Activated naive CD4-positive, alpha-beta T cell treated with anti-CD3 and anti-CD28 coated beads for 36 hours (primary cell): ENCODE measurements at regions of chr10 and their contacts with region 1.

Region 1: GRCh38 chr10:16828114-16828568 is 10.9 kb upstream of the RSU1 start:
- DNase-seq: peak; percentile 81
- H3K4me3 Mint-ChIP-seq: no peak overlapping the region
- H3K27ac Mint-ChIP-seq: no peak overlapping the region
- H3K4me1 Mint-ChIP-seq: peaks cover 4% of the 10 kb centered on the region
- H3K27me3 Mint-ChIP-seq: no peaks in the 10 kb centered on the region

Region 2: DNA sequence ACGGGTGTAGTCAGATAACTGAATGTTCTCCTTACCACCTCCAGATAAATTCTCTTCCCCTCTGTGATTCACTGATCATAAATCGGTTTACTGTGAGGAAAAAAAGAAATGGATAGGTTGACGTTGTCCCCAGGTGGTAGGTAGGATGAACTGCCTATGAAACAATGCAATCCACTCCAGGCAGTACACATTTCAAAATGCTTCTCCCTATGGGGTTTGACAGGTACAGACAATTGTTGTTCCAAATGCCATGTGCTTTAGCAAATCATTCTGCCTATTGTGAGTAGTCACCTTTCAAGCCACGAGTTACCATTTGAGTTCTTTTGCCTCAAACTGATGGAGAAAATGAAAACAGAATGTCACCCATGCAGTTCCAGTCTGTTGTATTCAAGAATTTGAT is 421.7 kb after region 1 on chr10:
- CTCF ChIA-PET with region 1: no interaction called
- intact Hi-C with region 1: loop called (anchors 1 kb)
- DNase-seq: no peak
- H3K4me3 Mint-ChIP-seq: no peak overlapping the region
- H3K27ac Mint-ChIP-seq: no peak overlapping the region
- H3K4me1 Mint-ChIP-seq: no peaks in the 10 kb centered on the region
- H3K27me3 Mint-ChIP-seq: no peaks in the 10 kb centered on the region

Region 3: DNA sequence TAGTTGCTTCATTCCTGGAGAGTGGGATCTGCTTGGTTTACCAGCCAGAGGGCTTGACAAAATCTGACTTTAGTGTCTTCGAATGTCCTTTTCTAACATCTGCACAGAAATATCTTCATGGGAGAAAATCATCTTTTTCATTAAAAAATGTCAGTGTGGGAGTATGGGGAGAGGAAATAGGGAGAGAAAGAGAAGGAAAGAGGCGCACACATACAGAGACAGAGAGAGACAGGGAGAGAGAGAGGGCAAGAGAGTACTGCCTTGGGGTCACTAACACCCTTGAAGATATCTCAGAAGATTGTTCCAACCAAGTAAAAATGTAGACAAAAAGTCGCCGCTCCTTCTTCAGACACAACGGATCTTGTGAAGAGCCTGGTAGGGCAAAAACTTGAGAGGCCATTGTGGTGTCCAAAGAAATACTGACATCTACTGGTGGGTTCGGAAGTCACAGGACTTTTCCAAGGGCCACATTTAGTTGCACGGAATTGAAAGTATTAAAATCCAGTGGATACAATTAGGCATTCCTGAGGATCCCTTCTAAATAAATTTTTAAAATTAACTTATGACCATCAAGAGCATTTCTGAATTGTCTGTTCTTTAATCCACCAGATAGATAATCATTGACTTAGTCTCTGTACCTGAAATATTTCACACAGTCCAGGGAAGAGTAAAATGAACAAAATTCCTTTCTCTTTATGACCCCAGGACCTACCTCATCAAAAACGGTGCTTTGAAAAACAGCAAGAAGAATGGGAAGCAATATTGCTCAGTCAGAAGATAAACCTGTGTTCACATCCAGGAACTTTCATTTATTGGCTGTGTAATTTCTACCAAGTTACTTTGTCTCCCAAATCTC is 429.6 kb after region 1 on chr10:
- CTCF ChIA-PET with region 1: interaction called, 22 read pairs
- intact Hi-C with region 1: loop called (anchors 1 kb)
- DNase-seq: peak; percentile 67
- H3K4me3 Mint-ChIP-seq: peak overlapping the region; percentile 3
- H3K27ac Mint-ChIP-seq: no peak overlapping the region
- H3K4me1 Mint-ChIP-seq: peaks cover 4% of the 10 kb centered on the region
- H3K27me3 Mint-ChIP-seq: no peaks in the 10 kb centered on the region

Region 4: GRCh38 chr10:17599089-17599488 is 770.9 kb after region 1 on chr10:
- CTCF ChIA-PET with region 1: no interaction called
- intact Hi-C with region 1: loop called (anchors 10 kb)
- DNase-seq: no peak
- H3K4me3 Mint-ChIP-seq: no peak overlapping the region
- H3K27ac Mint-ChIP-seq: no peak overlapping the region
- H3K4me1 Mint-ChIP-seq: no peaks in the 10 kb centered on the region
- H3K27me3 Mint-ChIP-seq: no peaks in the 10 kb centered on the region

Region 5: DNA sequence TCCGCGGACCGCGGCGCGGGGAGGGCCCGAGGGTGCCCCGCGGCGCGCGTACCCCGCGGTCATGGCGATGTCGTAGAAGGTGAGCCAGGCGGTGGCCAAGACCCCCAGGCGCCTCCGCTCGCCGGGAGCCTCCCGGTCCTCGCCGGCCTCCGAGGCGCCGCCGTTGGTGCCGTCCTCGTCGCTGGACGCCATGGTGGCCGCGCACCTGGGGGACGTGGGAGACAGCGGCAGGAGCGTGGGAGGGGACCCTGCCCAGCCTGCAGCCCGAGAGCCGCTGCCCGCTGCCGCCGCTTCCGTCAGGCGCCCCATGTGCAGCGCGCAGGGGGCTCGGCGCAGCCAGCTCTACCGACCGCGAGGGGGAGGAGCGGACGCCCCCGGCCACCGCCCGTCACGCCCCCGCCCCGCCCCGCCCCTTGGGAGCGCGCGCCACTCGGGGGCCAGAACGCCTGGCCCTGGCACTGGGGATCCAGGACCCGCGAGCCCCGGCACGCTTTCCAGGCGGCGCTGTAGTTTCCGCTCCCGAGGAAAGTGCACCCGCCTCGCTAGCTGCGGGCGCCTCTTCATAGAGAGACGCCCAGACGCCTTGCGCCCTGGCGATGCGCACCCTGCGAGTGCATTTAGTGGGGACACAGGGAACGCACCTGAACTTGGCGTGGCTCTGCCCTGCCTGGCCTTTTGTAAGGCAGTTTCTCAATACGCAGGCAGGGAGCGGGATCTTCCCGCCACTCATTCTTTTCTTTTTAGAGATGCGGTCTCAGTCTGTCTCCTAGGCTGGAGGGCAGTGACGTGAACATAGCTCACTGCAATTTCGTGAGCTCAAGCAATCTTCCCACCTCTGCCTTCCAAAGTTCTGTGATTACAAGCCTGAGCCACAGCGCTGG is 789.1 kb after region 1 on chr10 and contains the start of gene HACD1:
- CTCF ChIA-PET with region 1: no interaction called
- intact Hi-C with region 1: loop called (anchors 10 kb)
- DNase-seq: peak; percentile 64
- H3K4me3 Mint-ChIP-seq: peak within 1 kb of the TSS; percentile 82
- H3K27ac Mint-ChIP-seq: no peak within 1 kb of the TSS
- H3K4me1 Mint-ChIP-seq: peaks cover 3% of the 10 kb centered on the region
- H3K27me3 Mint-ChIP-seq: peaks cover 12% of the 10 kb centered on the region
- total RNA-seq, gene HACD1: 0.41 to 1.9 TPM